ENCODE measurements at regions of chr5 and their contacts with region 1.

Region 1: GRCh38 chr5:157219491-157220271 is 39.0 kb downstream of the ITK start:
- DNase-seq: no peak
- ATAC-seq: no peak
- H3K4me3 ChIP-seq: no peak overlapping the region
- H3K4me3 Mint-ChIP-seq: peak overlapping the region; percentile 27
- H3K27ac ChIP-seq: peak overlapping the region; percentile 70 to 72
- H3K27ac Mint-ChIP-seq: peak overlapping the region; percentile 80
- H3K4me1 ChIP-seq: peaks cover 99% of the 10 kb centered on the region
- H3K4me1 Mint-ChIP-seq: peaks cover 85% of the 10 kb centered on the region
- H3K27me3 ChIP-seq: no peaks in the 10 kb centered on the region
- H3K27me3 Mint-ChIP-seq: no peaks in the 10 kb centered on the region
- CTCF ChIP-seq: no peak

Region 2: DNA sequence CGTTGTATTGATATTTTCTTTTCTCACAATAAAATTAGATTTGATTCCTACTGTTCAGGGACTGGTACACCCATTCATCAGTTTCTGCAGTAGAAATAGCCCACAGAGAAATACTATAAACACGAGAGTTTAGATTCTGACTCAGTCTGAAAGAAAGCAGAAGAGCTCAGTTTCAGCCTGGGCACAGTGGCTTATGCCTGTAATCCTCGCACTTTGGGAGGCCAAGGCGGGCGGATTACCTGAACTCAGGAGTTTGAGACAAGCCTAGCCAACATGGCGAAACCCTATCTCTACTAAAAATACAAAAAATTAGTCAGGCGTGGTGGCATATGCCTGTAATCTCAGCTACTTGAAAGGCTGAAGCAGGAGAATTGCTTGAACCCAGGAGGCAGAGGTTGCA is 30.5 kb before region 1 on chr5:
- CTCF ChIA-PET with region 1: interaction called, 3 read pairs
- POLR2A ChIA-PET with region 1: interaction called, 121 read pairs
- intact Hi-C with region 1: loop called in 1 of 2 experiments (anchors 2 kb)
- DNase-seq: peak in 1 of 14 experiments; percentile 42
- ATAC-seq: no peak
- H3K4me3 ChIP-seq: peak overlapping the region; percentile 85
- H3K4me3 Mint-ChIP-seq: peak overlapping the region; percentile 92
- H3K27ac ChIP-seq: peak overlapping the region; percentile 38 to 67
- H3K27ac Mint-ChIP-seq: peak overlapping the region; percentile 96
- H3K4me1 ChIP-seq: peaks cover 72% of the 10 kb centered on the region
- H3K4me1 Mint-ChIP-seq: peaks cover 92% of the 10 kb centered on the region
- H3K27me3 ChIP-seq: no peaks in the 10 kb centered on the region
- H3K27me3 Mint-ChIP-seq: no peaks in the 10 kb centered on the region
- CTCF ChIP-seq: no peak

Region 3: DNA sequence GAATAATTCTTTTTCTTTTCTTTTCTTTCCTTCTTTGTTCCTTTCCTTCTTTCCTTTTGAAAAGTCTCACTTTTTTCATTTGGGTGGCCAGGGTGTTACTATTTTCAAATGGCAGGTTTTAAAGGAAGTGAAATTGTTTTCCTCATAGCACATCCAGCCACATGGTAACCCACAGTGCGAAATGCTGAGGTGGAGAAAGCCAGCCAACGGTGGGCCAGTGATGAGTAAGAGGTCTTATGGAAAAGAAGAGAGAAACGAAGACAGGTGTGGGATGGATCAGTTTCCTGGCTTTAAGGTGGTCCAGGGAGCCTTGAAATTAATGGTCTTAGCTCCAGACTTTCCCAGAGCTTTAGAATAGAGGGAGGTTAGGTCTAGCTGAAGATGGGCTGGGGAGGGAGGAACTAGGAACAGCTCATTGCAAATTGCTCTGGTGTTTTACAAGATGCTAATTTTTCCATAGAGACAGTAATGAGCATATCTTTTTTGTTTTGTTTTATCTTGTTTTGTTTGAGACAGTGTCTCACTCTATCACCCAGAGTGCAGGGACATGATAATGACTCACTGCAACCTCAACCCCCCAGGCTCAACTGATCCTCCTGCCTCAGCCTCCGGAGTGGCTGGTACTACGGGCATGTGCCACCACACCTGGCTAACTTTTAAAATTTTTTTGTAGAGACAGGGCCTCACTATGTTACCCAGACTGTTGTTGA is 21.2 kb before region 1 on chr5:
- CTCF ChIA-PET with region 1: interaction called, 4 read pairs
- POLR2A ChIA-PET with region 1: interaction called, 121 read pairs
- intact Hi-C with region 1: loop called (anchors 2 kb)
- DNase-seq: peak in 13 of 14 experiments; percentile 31 to 80 (median 59)
- ATAC-seq: peak; percentile 39
- H3K4me3 ChIP-seq: no peak overlapping the region
- H3K4me3 Mint-ChIP-seq: peak overlapping the region; percentile 49
- H3K27ac ChIP-seq: peak overlapping the region; percentile 63 to 79
- H3K27ac Mint-ChIP-seq: peak overlapping the region; percentile 96
- H3K4me1 ChIP-seq: peaks cover 80% of the 10 kb centered on the region
- H3K4me1 Mint-ChIP-seq: peaks cover 99% of the 10 kb centered on the region
- H3K27me3 ChIP-seq: no peaks in the 10 kb centered on the region
- H3K27me3 Mint-ChIP-seq: no peaks in the 10 kb centered on the region
- CTCF ChIP-seq: no peak

Region 4: DNA sequence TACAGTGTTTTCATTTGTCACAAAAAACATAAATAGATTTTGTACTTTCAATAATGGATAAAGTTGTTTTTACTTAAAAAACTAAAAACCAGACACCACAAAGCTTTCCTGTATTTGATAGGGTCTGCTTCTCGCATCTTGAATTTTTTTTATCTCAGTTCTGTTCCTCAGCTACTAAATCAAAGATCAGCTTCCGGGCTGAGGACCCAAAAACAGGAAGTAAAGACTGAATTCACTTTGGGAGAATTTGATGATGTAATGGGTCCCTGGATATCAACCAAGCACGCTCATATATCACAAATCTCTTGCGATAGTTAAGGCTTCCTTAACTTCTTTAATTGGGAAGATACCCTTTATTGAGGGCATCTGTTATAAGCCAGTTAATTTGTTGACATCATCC is 14.9 kb before region 1 on chr5:
- CTCF ChIA-PET with region 1: interaction called, 5 read pairs
- POLR2A ChIA-PET with region 1: interaction called, 108 read pairs
- intact Hi-C with region 1: loop called in 1 of 2 experiments (anchors 2 kb)
- DNase-seq: peak in 4 of 14 experiments; percentile 46 to 80 (median 77)
- ATAC-seq: peak; percentile 56
- H3K4me3 ChIP-seq: no peak overlapping the region
- H3K4me3 Mint-ChIP-seq: peak overlapping the region; percentile 72
- H3K27ac ChIP-seq: peak overlapping the region; percentile 73 to 83
- H3K27ac Mint-ChIP-seq: peak overlapping the region; percentile 96
- H3K4me1 ChIP-seq: peaks cover 86% of the 10 kb centered on the region
- H3K4me1 Mint-ChIP-seq: peaks cover 92% of the 10 kb centered on the region
- H3K27me3 ChIP-seq: no peaks in the 10 kb centered on the region
- H3K27me3 Mint-ChIP-seq: no peaks in the 10 kb centered on the region
- CTCF ChIP-seq: no peak

Region 5: GRCh38 chr5:157624144-157624543 is 404.5 kb after region 1 on chr5:
- CTCF ChIA-PET with region 1: no interaction called
- POLR2A ChIA-PET with region 1: no interaction called
- intact Hi-C with region 1: no loop called
- DNase-seq: no peak
- ATAC-seq: no peak
- H3K4me3 ChIP-seq: no peak overlapping the region
- H3K4me3 Mint-ChIP-seq: no peak overlapping the region
- H3K27ac ChIP-seq: no peak overlapping the region
- H3K27ac Mint-ChIP-seq: no peak overlapping the region
- H3K4me1 ChIP-seq: no peaks in the 10 kb centered on the region
- H3K4me1 Mint-ChIP-seq: no peaks in the 10 kb centered on the region
- H3K27me3 ChIP-seq: no peaks in the 10 kb centered on the region
- H3K27me3 Mint-ChIP-seq: no peaks in the 10 kb centered on the region
- CTCF ChIP-seq: no peak

Region 6: GRCh38 chr5:157930710-157931109 is 711.0 kb after region 1 on chr5:
- CTCF ChIA-PET with region 1: no interaction called
- POLR2A ChIA-PET with region 1: no interaction called
- intact Hi-C with region 1: no loop called
- DNase-seq: no peak
- ATAC-seq: no peak
- H3K4me3 ChIP-seq: no peak overlapping the region
- H3K4me3 Mint-ChIP-seq: no peak overlapping the region
- H3K27ac ChIP-seq: no peak overlapping the region
- H3K27ac Mint-ChIP-seq: no peak overlapping the region
- H3K4me1 ChIP-seq: no peaks in the 10 kb centered on the region
- H3K4me1 Mint-ChIP-seq: no peaks in the 10 kb centered on the region
- H3K27me3 ChIP-seq: no peaks in the 10 kb centered on the region
- H3K27me3 Mint-ChIP-seq: no peaks in the 10 kb centered on the region
- CTCF ChIP-seq: no peak

Measured in CD4-positive, alpha-beta T cell (primary cell).